Lower leg skin (tissue), 4 donors: ENCODE measurements at regions of chr1 and their contacts with region 1.

Region 1: DNA sequence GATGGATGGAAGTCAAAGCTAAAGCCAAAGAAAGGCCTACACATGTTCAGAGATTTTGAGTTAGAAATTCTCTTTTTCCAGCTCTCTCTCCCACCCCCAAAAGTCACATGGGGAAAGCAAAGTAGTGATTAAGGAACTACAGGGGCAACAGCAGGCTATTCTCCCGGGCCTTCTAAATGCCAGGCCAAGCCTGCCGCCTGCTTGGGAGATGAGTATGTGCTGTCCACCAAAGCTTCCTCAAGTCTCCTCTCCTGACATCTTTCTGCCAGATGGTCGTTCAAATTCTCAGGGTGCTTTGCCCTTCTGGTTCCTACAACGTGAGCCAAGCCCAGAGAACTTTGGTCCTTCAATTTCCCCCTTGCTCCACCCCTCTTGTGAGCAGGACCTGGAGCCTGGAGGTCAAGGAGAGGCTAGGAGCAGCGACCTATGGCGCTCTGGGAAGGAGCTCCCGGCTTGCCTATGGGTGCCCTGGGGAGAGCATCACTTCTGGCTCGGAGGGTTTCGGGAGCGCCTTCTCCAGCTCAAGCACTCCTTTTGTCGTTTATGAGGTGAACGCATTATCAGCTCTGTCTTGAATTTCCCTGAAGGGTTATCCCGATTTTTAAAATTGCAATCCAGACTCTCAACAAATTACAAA is 4.4 kb upstream of the PRRX1 start:
- DNase-seq: no peak
- H3K4me3 ChIP-seq: no peak overlapping the region
- CTCF ChIP-seq: no peak
- POLR2A ChIP-seq: no peak

Region 2: GRCh38 chr1:170284951-170285350 is 374.6 kb before region 1 on chr1:
- intact Hi-C with region 1: no loop called
- DNase-seq: no peak
- H3K4me3 ChIP-seq: no peak overlapping the region
- CTCF ChIP-seq: no peak
- POLR2A ChIP-seq: no peak

Region 3: DNA sequence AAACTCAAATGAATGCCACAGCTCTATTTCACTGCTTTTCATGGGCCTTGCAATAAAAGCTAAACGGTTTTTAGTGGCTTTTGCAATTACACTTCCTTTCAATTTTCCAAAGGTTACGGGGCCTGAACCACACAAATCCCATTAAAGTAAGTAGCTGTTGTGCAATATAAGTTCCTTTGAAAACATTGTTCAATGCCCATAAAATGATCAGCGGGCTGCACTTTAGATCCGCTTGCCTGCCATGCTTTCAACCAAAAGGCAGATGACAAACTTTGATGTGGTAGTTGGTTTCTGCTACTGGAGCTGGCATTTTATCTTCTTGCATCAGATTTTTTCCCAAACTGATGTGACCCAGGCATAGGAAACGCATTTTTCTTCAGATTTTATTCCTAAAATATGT is 54.6 kb after region 1 on chr1:
- intact Hi-C with region 1: loop called (anchors 2 kb)
- DNase-seq: no peak
- H3K4me3 ChIP-seq: peak overlapping the region; percentile 5
- CTCF ChIP-seq: no peak
- POLR2A ChIP-seq: no peak